Activated CD4-positive, alpha-beta memory T cell treated with anti-CD3 and anti-CD28 coated beads for 36 hours (primary cell): ENCODE measurements at regions of chr6 and their contacts with region 1.

Region 1: DNA sequence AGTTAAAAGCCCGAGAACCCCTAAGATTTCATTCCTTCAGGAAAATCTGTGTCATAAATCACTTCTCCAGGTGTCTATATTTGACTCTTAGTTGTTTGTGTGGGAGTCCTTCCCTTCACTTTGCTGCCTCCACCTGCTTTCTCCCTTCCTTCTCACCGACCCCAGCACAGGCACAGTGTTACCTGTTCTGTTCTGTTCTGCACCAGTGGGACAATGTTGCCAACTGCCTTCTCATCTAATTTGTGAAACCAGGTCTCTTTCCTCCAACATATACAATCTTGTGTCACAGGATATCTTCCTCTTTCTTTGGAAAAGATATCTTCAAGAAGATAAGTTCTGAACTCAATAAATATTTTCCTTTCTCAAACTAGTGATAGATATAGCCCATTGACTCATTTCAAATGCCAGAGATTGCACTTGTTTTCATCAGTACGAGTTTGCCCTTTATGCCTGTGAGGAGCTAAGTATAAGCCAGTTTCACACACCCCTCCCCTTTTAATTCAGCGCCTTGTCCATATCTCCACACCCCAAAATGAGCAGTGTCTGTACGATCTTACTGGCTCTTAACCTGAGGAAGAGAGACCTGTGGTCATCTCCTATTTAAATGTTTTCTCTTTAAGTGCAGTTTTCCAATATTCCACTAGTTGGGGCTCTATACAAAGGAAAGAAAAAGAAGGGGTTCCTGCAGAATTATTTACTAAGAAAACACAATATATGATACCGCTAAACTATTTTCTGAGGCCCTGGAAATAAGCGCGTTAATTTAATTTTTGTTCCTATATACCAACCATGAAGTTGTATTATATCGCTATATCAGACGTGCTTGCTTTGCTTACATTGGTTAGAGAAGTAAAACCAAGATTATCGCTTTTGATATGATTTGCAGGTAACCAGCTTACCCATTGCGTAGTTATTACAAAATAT is 81.6 kb upstream of the PREP start:
- DNase-seq: no peak
- H3K4me3 Mint-ChIP-seq: peak overlapping the region; percentile 2
- H3K27ac Mint-ChIP-seq: peak overlapping the region; percentile 30
- H3K4me1 Mint-ChIP-seq: peaks cover 32% of the 10 kb centered on the region
- H3K27me3 Mint-ChIP-seq: peaks cover 7% of the 10 kb centered on the region

Region 2: DNA sequence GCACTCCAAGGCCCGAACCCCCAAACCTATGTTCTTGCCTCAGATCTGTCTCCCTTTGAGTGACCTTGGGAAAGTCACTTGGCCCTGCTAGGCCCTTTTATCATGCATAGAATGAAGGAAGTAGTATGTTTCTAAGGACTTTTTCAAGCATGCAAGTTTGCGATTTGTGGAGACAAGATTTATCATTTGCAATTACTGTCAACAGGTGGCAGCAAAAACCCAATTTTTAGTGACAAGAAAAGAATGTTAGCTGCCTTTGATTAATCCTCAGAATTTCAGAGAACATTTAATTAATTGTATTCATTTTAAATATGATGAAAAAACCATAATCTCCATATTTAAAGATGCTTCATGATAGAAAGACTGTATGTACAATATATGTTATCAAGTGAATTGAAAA is 53.3 kb before region 1 on chr6:
- CTCF ChIA-PET with region 1: interaction called, 20 read pairs
- POLR2A ChIA-PET with region 1: no interaction called
- intact Hi-C with region 1: loop called (anchors 2 kb)
- DNase-seq: no peak
- H3K4me3 Mint-ChIP-seq: no peak overlapping the region
- H3K27ac Mint-ChIP-seq: no peak overlapping the region
- H3K4me1 Mint-ChIP-seq: no peaks in the 10 kb centered on the region
- H3K27me3 Mint-ChIP-seq: peaks cover 8% of the 10 kb centered on the region

Region 3: DNA sequence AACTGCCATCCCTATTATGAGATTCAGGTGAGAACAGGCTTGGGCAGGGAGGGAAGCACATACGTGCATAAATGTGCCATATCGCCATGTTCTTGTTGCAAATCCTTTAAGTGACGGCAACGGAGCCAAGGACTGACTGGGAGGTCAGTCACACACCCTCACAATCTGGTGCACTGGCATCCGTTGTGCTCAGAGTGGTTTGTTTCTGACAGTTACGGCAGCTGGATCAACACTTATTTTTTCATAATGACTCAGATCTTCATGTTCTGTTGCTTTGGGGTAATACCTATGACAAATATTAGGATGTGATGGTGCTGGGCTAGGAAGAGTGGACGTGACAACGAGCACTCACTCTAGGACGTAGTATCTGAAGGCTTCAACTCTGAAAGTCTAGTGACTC is 25.5 kb before region 1 on chr6:
- CTCF ChIA-PET with region 1: interaction called, 3 read pairs
- POLR2A ChIA-PET with region 1: no interaction called
- intact Hi-C with region 1: loop called (anchors 1 kb)
- DNase-seq: peak; percentile 71
- H3K4me3 Mint-ChIP-seq: peak overlapping the region; percentile 36
- H3K27ac Mint-ChIP-seq: peak overlapping the region; percentile 80
- H3K4me1 Mint-ChIP-seq: peaks cover 30% of the 10 kb centered on the region
- H3K27me3 Mint-ChIP-seq: peaks cover 20% of the 10 kb centered on the region

Region 4: GRCh38 chr6:105504706-105505105 is 20.2 kb after region 1 on chr6:
- CTCF ChIA-PET with region 1: no interaction called
- POLR2A ChIA-PET with region 1: no interaction called
- intact Hi-C with region 1: no loop called
- DNase-seq: no peak
- H3K4me3 Mint-ChIP-seq: no peak overlapping the region
- H3K27ac Mint-ChIP-seq: no peak overlapping the region
- H3K4me1 Mint-ChIP-seq: no peaks in the 10 kb centered on the region
- H3K27me3 Mint-ChIP-seq: peaks cover 1% of the 10 kb centered on the region

Region 5: DNA sequence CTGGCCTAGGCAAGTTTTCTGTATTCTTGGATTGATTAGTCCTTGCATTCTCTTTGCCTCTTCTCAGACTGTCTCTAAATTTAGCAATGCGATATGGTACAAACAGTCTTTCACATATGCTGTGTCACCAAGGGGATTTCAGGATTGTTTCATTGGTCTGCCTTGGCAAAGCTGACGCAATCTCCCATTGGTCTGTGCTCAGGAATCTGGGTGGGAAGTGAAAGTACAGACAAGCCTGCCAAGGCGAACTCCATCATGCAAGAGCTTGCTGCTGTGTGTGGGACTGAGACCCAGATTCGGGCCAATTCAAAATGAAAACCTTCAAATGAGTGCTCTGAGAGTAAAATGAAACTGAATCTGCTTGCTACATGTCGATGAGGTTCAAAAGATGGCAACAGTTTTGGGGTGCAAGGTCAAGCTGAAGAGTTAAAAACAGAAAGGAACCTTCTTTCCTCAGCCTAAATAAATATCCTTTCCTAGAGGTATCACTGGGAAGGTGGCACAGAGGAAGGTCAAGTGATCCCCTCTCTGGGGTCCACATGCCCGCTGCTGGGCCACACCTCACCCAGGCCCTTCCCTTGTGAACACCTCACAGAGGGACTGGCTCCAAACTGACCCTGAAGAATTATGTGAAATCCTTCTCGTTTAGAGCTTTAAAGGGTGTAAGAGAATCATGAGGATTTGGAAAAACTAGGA is 117.2 kb after region 1 on chr6:
- CTCF ChIA-PET with region 1: no interaction called
- POLR2A ChIA-PET with region 1: no interaction called
- intact Hi-C with region 1: loop called (anchors 1 kb)
- DNase-seq: peak; percentile 86
- H3K4me3 Mint-ChIP-seq: peak overlapping the region; percentile 33
- H3K27ac Mint-ChIP-seq: peak overlapping the region; percentile 86
- H3K4me1 Mint-ChIP-seq: peaks cover 26% of the 10 kb centered on the region
- H3K27me3 Mint-ChIP-seq: peaks cover 3% of the 10 kb centered on the region

Region 6: GRCh38 chr6:105733565-105734162 is 249.2 kb after region 1 on chr6:
- CTCF ChIA-PET with region 1: no interaction called
- POLR2A ChIA-PET with region 1: no interaction called
- intact Hi-C with region 1: loop called (anchors 2 kb)
- DNase-seq: no peak
- H3K4me3 Mint-ChIP-seq: no peak overlapping the region
- H3K27ac Mint-ChIP-seq: no peak overlapping the region
- H3K4me1 Mint-ChIP-seq: no peaks in the 10 kb centered on the region
- H3K27me3 Mint-ChIP-seq: no peaks in the 10 kb centered on the region

Region 7: GRCh38 chr6:105793130-105793529 is 308.6 kb after region 1 on chr6:
- CTCF ChIA-PET with region 1: no interaction called
- POLR2A ChIA-PET with region 1: no interaction called
- intact Hi-C with region 1: loop called (anchors 5 kb)
- DNase-seq: peak; percentile 30
- H3K4me3 Mint-ChIP-seq: no peak overlapping the region
- H3K27ac Mint-ChIP-seq: no peak overlapping the region
- H3K4me1 Mint-ChIP-seq: peaks cover 54% of the 10 kb centered on the region
- H3K27me3 Mint-ChIP-seq: peaks cover 4% of the 10 kb centered on the region

Region 8: DNA sequence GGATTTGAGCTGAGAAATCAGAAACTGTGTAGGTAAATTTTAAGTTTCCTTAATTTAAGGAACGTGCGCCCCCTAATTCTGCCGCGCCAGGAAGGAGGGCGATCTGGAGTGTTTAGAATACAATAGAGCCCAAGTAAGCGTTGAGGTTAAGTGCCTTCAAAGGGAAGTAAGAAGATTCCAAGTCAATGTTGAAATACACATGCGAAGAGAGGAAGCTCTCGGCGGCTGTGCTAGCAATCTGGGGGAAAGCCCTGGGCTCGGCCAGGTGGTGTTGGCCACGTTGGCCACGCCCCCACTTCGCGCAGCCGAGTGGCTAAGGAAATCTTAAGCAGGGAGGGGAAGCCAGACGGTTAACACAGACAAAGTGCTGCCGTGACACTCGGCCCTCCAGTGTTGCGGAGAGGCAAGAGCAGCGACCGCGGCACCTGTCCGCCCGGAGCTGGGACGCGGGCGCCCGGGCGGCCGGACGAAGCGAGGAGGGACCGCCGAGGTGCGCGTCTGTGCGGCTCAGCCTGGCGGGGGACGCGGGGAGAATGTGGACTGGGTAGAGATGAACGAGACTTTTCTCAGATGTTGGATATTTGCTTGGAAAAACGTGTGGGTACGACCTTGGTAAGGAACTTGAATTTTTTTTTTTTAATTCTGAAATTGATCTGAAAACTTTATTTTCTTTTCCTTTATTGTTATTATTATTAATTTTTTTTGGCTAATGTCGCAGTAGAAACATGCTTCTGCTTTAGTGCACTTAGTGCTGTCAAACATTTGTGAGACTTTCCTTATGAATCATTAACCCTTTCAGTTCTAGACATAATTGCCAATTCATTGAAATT is 601.7 kb after region 1 on chr6 and contains the start of gene PRDM1:
- CTCF ChIA-PET with region 1: no interaction called
- POLR2A ChIA-PET with region 1: no interaction called
- intact Hi-C with region 1: loop called (anchors 2 kb)
- DNase-seq: peak; percentile 89
- H3K4me3 Mint-ChIP-seq: peak within 1 kb of the TSS; percentile 90
- H3K27ac Mint-ChIP-seq: peak within 1 kb of the TSS; percentile 94
- H3K4me1 Mint-ChIP-seq: peaks cover 73% of the 10 kb centered on the region
- H3K27me3 Mint-ChIP-seq: peaks cover 2% of the 10 kb centered on the region
- total RNA-seq, gene PRDM1: 70.9 to 78.9 TPM